Activated CD4-positive, alpha-beta memory T cell treated with anti-CD3 and anti-CD28 coated beads, Interleukin-2, amount 10 ng/mL, durations not matched to agents 7 days and 5 days (primary cell): ENCODE measurements at regions of chr14 and their contacts with region 1.

Region 1: DNA sequence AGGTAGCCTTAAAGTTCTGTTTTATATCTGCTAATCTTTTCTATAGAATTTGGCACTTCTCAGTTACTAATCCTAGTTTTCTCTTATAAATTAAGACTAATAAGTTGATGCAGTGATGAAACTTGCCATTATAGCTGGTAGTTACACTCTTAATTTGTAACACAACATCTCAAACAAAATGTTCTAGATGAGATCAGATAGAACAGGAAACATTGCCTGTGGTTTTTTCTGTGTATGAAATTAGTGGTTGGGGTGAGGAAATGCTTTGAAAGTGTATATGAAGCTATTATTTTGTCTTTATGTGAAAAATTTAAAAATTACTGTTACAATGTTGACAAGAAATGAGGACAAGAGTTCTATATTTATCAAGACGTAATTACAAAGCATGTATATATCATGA is 91.9 kb downstream of the PCNX1 start:
- DNase-seq: no peak
- H3K4me3 Mint-ChIP-seq: peak overlapping the region; percentile 12
- H3K27ac Mint-ChIP-seq: peak overlapping the region; percentile 41
- H3K4me1 Mint-ChIP-seq: peaks cover 51% of the 10 kb centered on the region
- H3K27me3 Mint-ChIP-seq: no peaks in the 10 kb centered on the region

Region 2: GRCh38 chr14:70988452-70988851 is 10.7 kb before region 1 on chr14:
- CTCF ChIA-PET with region 1: interaction called, 7 read pairs
- POLR2A ChIA-PET with region 1: interaction called, 20 read pairs
- DNase-seq: peak; percentile 42
- H3K4me3 Mint-ChIP-seq: peak overlapping the region; percentile 71
- H3K27ac Mint-ChIP-seq: peak overlapping the region; percentile 81
- H3K4me1 Mint-ChIP-seq: peaks cover 27% of the 10 kb centered on the region
- H3K27me3 Mint-ChIP-seq: no peaks in the 10 kb centered on the region